ENCODE measurements at regions of chr16 and their contacts with region 1.

Region 1: GRCh38 chr16:89700100-89700648 is 1.3 kb downstream of the SPATA2L start:
- DNase-seq: peak; percentile 96
- H3K4me3 ChIP-seq: peak overlapping the region in 2 of 3 experiments; percentile 7 to 62
- H3K27ac ChIP-seq: peak overlapping the region; percentile 26
- H3K4me1 ChIP-seq: peaks cover 9% of the 10 kb centered on the region
- H3K27me3 ChIP-seq: no peaks in the 10 kb centered on the region
- CTCF ChIP-seq: peak; percentile 70 to 88
- POLR2A ChIP-seq: no peak

Region 2: GRCh38 chr16:89686520-89687091 is 13.6 kb before region 1 on chr16 and contains the start of gene CDK10:
- CTCF ChIA-PET with region 1: interaction called, 21 read pairs
- POLR2A ChIA-PET with region 1: interaction called, 5 read pairs
- dilution Hi-C with region 1: no loop called
- intact Hi-C with region 1: loop called (anchors 1 kb)
- DNase-seq: peak; percentile 91
- H3K4me3 ChIP-seq: peak within 1 kb of the TSS; percentile 27 to 85 (median 35)
- H3K27ac ChIP-seq: peak within 1 kb of the TSS; percentile 14
- H3K4me1 ChIP-seq: peaks cover 4% of the 10 kb centered on the region
- H3K27me3 ChIP-seq: no peaks in the 10 kb centered on the region
- CTCF ChIP-seq: no peak
- POLR2A ChIP-seq: peak; percentile 89
- total RNA-seq, gene CDK10: 84.0 and 99.9 TPM in 2 replicates

Region 3: DNA sequence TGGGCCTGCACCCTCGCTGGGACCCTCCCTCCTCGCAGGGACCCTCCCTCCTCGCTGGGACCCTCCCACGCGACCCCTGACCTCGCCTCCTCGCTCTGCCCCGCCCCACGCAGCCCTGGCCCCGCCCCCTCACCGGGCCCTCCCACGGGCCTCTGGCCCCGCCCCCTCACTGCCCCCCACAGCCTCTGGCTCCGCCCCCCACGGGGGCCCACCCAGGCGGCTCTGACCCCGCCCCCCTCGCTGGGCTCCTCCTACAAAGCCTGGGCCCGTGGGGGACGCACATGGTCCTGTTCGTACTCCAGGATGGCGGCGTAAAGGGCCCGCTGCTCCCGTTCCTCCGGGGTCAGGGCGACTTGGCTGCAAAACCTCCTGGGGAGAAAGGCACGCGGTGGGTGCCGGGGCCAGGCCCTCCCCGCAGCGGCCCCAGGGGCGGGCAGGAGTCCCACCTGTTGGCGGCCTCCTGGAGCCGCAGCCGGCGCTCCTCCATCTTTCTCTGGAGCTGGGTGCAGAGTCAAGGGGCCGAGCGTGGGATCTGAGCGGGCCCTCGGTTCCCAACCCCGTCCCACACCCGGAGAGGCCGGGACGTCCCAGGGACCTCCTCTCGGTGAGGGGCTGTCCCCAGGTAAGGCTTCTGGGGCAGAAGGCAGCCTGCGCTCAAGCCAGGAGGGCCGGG is 11.6 kb after region 1 on chr16:
- CTCF ChIA-PET with region 1: interaction called, 13 read pairs
- POLR2A ChIA-PET with region 1: no interaction called
- dilution Hi-C with region 1: no loop called
- intact Hi-C with region 1: no loop called
- DNase-seq: peak; percentile 66
- H3K4me3 ChIP-seq: peak overlapping the region; percentile 45 to 95 (median 75)
- H3K27ac ChIP-seq: peak overlapping the region; percentile 78
- H3K4me1 ChIP-seq: peaks cover 9% of the 10 kb centered on the region
- H3K27me3 ChIP-seq: no peaks in the 10 kb centered on the region
- CTCF ChIP-seq: no peak
- POLR2A ChIP-seq: peak; percentile 85

Region 4: GRCh38 chr16:89720813-89721545 is 20.8 kb after region 1 on chr16 and contains the starts of genes VPS9D1 and ZNF276:
- CTCF ChIA-PET with region 1: interaction called, 13 read pairs
- POLR2A ChIA-PET with region 1: no interaction called
- dilution Hi-C with region 1: no loop called
- intact Hi-C with region 1: loop called (anchors 1 kb)
- DNase-seq: peak; percentile 79
- H3K4me3 ChIP-seq: peak within 1 kb of the TSS; percentile 57 to 76 (median 63)
- H3K27ac ChIP-seq: peak within 1 kb of the TSS; percentile 95
- H3K4me1 ChIP-seq: peaks cover 36% of the 10 kb centered on the region
- H3K27me3 ChIP-seq: no peaks in the 10 kb centered on the region
- CTCF ChIP-seq: no peak
- POLR2A ChIP-seq: peak; percentile 80
- total RNA-seq, gene VPS9D1: 15.5 and 18.3 TPM in 2 replicates
- total RNA-seq, gene ZNF276: 36.6 and 42.7 TPM in 2 replicates

Region 5: GRCh38 chr16:89791278-89791995 is 91.3 kb after region 1 on chr16:
- CTCF ChIA-PET with region 1: interaction called, 119 read pairs
- POLR2A ChIA-PET with region 1: no interaction called
- dilution Hi-C with region 1: no loop called
- intact Hi-C with region 1: no loop called
- DNase-seq: no peak
- H3K4me3 ChIP-seq: no peak overlapping the region
- H3K27ac ChIP-seq: no peak overlapping the region
- H3K4me1 ChIP-seq: no peaks in the 10 kb centered on the region
- H3K27me3 ChIP-seq: no peaks in the 10 kb centered on the region
- CTCF ChIP-seq: no peak
- POLR2A ChIP-seq: no peak

Region 6: GRCh38 chr16:89873972-89874689 is 174.0 kb after region 1 on chr16:
- CTCF ChIA-PET with region 1: interaction called, 9 read pairs
- POLR2A ChIA-PET with region 1: no interaction called
- dilution Hi-C with region 1: no loop called
- intact Hi-C with region 1: loop called (anchors 1 kb)
- DNase-seq: peak; percentile 96
- H3K4me3 ChIP-seq: peak overlapping the region; percentile 76 to 85 (median 76)
- H3K27ac ChIP-seq: no peak overlapping the region
- H3K4me1 ChIP-seq: peaks cover 8% of the 10 kb centered on the region
- H3K27me3 ChIP-seq: no peaks in the 10 kb centered on the region
- CTCF ChIP-seq: no peak
- POLR2A ChIP-seq: no peak

Region 7: GRCh38 chr16:89909777-89910716 is 209.9 kb after region 1 on chr16:
- CTCF ChIA-PET with region 1: interaction called, 10 read pairs
- POLR2A ChIA-PET with region 1: no interaction called
- dilution Hi-C with region 1: no loop called
- intact Hi-C with region 1: no loop called
- DNase-seq: peak; percentile 57
- H3K4me3 ChIP-seq: no peak overlapping the region
- H3K27ac ChIP-seq: no peak overlapping the region
- H3K4me1 ChIP-seq: peaks cover 3% of the 10 kb centered on the region
- H3K27me3 ChIP-seq: no peaks in the 10 kb centered on the region
- CTCF ChIP-seq: peak; percentile 98 to 99
- POLR2A ChIP-seq: no peak

Measured in endothelial cell of umbilical vein (primary cell).